Transverse colon (tissue), 4 donors: ENCODE measurements at regions of chr20 and their contacts with region 1.

Region 1: GRCh38 chr20:60984666-60985065 is 267.4 kb upstream of the CDH4 start:
- DNase-seq: no peak
- H3K4me3 ChIP-seq: no peak overlapping the region
- H3K27ac ChIP-seq: no peak overlapping the region
- H3K4me1 ChIP-seq: no peaks in the 10 kb centered on the region
- H3K27me3 ChIP-seq: no peaks in the 10 kb centered on the region
- CTCF ChIP-seq: no peak
- EP300 ChIP-seq: no peak
- POLR2A ChIP-seq: no peak

Region 2: GRCh38 chr20:61684583-61685235 is 700.0 kb after region 1 on chr20:
- in situ Hi-C with region 1: no loop called
- intact Hi-C with region 1: loop called (anchors 5 kb)
- DNase-seq: no peak
- H3K4me3 ChIP-seq: no peak overlapping the region
- H3K27ac ChIP-seq: no peak overlapping the region
- H3K4me1 ChIP-seq: no peaks in the 10 kb centered on the region
- H3K27me3 ChIP-seq: peaks cover 10% of the 10 kb centered on the region
- CTCF ChIP-seq: no peak
- EP300 ChIP-seq: no peak
- POLR2A ChIP-seq: no peak